ENCODE measurements at regions of chr18 and their contacts with region 1.

Region 1: GRCh38 chr18:50128506-50129271 is 66.3 kb downstream of the MYO5B start:
- DNase-seq: no peak
- CTCF ChIP-seq: no peak

Region 2: DNA sequence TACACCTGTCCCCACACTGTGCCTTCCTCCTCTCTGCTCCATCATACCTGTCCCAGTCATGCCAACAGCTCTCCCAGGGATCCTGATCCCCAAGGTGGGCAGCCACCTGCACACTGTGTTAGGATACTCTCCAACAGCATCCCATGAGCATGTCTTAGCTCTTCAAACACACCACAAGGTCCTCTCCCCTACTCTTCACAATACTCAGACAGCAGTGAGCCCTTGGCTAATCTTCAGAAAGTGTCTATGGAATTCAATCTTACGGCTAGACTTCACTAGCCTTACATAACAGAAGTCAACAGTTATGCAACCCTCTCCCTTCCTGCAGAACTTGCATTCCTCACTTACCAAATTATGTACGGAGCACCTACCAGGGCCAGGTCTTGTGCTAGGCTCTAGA is 13.6 kb before region 1 on chr18:
- CTCF ChIA-PET with region 1: interaction called, 19 read pairs
- POLR2A ChIA-PET with region 1: no interaction called
- DNase-seq: no peak
- CTCF ChIP-seq: no peak

Measured in GM10248 (cell line).